ENCODE measurements at regions of chr1 and their contacts with region 1.

Region 1: DNA sequence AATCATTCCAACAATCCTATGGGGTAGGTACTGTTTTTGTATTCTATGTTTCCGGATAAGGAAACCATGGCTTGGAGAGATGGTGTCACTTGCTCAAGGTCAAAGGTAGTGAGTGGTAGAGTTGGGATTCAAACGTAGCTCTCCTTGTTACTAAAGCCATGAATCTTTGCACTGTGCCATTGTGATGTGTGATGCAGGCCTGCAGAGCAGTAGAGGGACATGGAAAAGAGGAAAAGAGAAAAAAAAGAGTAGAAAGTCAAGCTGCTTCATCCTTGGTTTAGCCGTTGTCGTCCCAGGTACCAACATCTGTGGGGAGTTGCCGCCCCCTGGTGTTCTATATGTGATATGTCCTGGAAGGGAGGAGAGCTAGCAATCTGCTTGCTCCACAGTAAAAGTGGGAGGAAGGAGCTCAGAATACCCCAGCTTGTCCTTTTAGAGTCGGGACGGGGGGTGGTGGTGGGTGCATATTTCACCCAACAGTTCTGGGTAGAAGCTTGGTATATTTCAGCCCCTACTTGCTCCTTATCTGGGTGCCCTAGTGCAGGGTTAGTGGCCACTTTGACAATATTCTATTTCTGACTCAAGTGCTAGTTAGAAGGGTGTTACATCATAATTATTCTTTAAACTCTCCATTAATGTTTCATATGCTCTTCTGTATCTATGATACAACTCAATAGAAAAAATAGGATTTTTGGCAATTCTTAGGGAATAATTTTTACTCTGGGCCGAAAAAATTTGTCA is 98.4 kb downstream of the EBNA1BP2 start:
- DNase-seq: peak; percentile 82
- ATAC-seq: peak; percentile 86
- H3K4me3 Mint-ChIP-seq: no peak overlapping the region
- H3K27ac Mint-ChIP-seq: peak overlapping the region; percentile 17
- H3K4me1 Mint-ChIP-seq: peaks cover 6% of the 10 kb centered on the region
- H3K27me3 Mint-ChIP-seq: peaks cover 2% of the 10 kb centered on the region

Region 2: DNA sequence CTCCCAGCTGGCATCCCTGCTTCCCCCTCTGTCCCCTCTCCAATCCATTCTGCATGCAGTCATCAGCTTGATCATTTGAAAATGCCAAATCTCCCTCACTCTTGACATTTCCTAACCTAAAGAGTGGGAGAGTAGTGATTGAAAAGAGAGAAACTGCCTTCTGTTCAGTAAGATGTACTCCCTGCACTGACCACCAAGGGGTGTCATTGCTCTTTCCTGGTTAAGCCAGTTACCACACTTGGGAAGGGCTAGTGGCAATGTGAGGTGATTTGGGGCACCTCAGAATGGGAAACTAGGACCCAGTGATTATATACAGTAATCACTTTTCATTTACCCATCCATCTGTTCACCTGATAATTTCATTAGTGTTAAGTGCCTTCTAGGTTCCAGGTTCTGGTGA is 295.8 kb before region 1 on chr1:
- CTCF ChIA-PET with region 1: interaction called, 61 read pairs
- POLR2A ChIA-PET with region 1: no interaction called
- DNase-seq: peak; percentile 44
- ATAC-seq: peak; percentile 47
- H3K4me3 Mint-ChIP-seq: no peak overlapping the region
- H3K27ac Mint-ChIP-seq: peak overlapping the region; percentile 53
- H3K4me1 Mint-ChIP-seq: peaks cover 36% of the 10 kb centered on the region
- H3K27me3 Mint-ChIP-seq: no peaks in the 10 kb centered on the region

Region 3: DNA sequence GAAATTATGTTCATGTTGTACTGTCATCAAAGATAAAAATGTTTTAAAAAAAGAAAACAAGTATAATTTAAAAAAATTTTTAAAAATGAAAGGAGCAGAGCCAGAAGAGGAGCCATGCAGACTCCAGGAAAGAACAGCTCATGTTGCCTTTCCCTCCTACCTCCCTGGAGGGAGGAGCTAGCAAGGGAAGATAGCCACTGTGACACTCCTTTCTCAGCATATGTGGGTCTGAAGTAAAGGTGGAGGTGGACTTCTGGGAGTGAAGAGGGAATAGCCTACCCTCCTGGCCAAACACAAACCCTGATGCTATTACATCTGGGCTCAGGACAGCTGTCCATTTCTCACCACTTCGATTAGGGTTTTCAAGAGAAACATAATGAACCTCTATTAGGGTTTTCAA is 169.2 kb before region 1 on chr1:
- CTCF ChIA-PET with region 1: interaction called, 13 read pairs
- POLR2A ChIA-PET with region 1: no interaction called
- DNase-seq: no peak
- ATAC-seq: no peak
- H3K4me3 Mint-ChIP-seq: no peak overlapping the region
- H3K27ac Mint-ChIP-seq: no peak overlapping the region
- H3K4me1 Mint-ChIP-seq: no peaks in the 10 kb centered on the region
- H3K27me3 Mint-ChIP-seq: peaks cover 6% of the 10 kb centered on the region

Region 4: GRCh38 chr1:42931108-42931539 is 142.5 kb before region 1 on chr1:
- CTCF ChIA-PET with region 1: interaction called, 18 read pairs
- POLR2A ChIA-PET with region 1: no interaction called
- DNase-seq: peak; percentile 78
- ATAC-seq: peak; percentile 44
- H3K4me3 Mint-ChIP-seq: peak overlapping the region; percentile 74
- H3K27ac Mint-ChIP-seq: peak overlapping the region; percentile 97
- H3K4me1 Mint-ChIP-seq: peaks cover 97% of the 10 kb centered on the region
- H3K27me3 Mint-ChIP-seq: no peaks in the 10 kb centered on the region

Region 5: DNA sequence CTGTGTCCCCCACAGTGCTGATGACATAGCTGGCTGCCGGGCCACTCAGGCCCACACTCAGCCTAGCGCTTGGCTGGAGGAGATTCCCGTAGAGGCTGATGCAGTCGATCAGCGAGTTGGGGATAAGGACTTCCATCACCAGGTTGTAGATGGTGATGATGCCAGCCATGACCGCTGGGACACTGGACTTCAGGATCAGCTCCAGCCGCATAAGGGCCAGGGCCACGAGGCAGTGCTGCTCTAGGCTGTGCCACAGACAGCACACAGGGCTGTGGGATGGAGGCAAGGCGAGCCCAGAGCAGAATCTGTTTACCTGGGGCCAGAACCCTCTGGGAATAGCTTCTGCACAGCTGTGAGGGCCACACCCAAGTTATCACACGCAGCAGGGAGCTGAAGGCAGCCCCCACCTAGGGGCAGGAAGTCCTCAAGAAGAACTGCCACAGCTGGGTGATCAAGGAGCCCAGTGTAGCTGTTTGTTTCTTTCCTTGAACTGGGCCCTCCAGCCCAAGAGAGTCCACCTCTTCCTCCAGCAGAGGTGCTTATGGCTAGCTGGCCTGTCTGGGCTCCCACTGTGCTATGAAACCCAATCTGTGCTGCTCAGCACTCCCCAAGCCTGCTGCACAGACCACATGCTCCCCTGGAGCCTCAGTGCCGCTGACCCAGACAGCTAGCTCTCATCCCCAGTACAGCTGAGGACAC is 121.2 kb before region 1 on chr1:
- CTCF ChIA-PET with region 1: interaction called, 32 read pairs
- POLR2A ChIA-PET with region 1: no interaction called
- DNase-seq: peak; percentile 58
- ATAC-seq: peak; percentile 58
- H3K4me3 Mint-ChIP-seq: peak overlapping the region; percentile 49
- H3K27ac Mint-ChIP-seq: peak overlapping the region; percentile 78
- H3K4me1 Mint-ChIP-seq: peaks cover 88% of the 10 kb centered on the region
- H3K27me3 Mint-ChIP-seq: no peaks in the 10 kb centered on the region

Region 6: GRCh38 chr1:43015015-43015668 is 58.5 kb before region 1 on chr1:
- CTCF ChIA-PET with region 1: no interaction called
- POLR2A ChIA-PET with region 1: no interaction called
- DNase-seq: no peak
- ATAC-seq: no peak
- H3K4me3 Mint-ChIP-seq: no peak overlapping the region
- H3K27ac Mint-ChIP-seq: no peak overlapping the region
- H3K4me1 Mint-ChIP-seq: peaks cover 4% of the 10 kb centered on the region
- H3K27me3 Mint-ChIP-seq: peaks cover 26% of the 10 kb centered on the region

Region 7: DNA sequence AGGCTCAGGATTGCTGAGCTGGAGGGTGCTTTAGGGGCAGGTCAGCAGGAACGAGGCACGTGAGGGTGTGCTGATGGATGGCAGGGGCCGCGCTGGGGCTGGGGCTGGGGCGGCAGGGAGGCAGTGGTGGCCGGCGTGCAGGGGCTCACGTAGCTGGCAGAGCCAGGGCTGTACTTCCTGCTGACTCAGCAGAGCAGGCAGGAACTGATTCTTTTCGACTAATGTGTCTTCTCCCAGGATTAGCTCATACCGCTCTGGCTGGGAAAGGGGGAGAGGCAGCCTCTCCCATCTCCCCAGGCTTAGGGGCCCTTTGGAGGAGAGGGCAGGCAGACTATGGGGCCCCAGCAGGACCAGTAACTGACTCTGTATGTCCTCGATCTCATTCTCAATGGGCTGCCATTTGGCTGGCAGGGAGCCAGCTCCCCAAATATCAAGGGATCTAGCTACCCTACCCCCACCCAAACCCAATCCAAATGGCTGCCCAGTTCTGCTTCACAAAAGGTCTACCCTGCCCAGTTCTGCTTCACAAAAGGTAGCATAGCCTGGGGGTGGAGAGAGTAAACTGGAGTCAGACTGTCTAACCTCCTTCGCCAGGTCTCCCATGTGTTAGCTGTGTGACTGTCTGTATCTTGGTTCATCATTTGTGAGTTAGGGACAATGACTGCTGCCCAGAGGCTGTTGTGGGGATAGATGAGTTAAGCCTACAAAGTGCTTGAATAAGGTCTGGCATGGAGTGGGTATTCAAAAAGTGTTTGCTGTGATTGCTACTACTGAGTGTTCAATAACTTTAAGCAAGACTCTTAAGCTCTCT is 14.9 kb before region 1 on chr1:
- CTCF ChIA-PET with region 1: interaction called, 27 read pairs
- POLR2A ChIA-PET with region 1: interaction called, 5 read pairs
- DNase-seq: peak; percentile 44
- ATAC-seq: peak; percentile 57
- H3K4me3 Mint-ChIP-seq: no peak overlapping the region
- H3K27ac Mint-ChIP-seq: peak overlapping the region; percentile 73
- H3K4me1 Mint-ChIP-seq: peaks cover 20% of the 10 kb centered on the region
- H3K27me3 Mint-ChIP-seq: no peaks in the 10 kb centered on the region

Measured in activated CD8-positive, alpha-beta T cell treated with anti-CD3 and anti-CD28 coated beads, Interleukin-2, amount 10 ng/mL, durations not matched to agents 7 days and 5 days (primary cell).